ENCODE measurements at regions of chrX and their contacts with region 1.

Region 1: DNA sequence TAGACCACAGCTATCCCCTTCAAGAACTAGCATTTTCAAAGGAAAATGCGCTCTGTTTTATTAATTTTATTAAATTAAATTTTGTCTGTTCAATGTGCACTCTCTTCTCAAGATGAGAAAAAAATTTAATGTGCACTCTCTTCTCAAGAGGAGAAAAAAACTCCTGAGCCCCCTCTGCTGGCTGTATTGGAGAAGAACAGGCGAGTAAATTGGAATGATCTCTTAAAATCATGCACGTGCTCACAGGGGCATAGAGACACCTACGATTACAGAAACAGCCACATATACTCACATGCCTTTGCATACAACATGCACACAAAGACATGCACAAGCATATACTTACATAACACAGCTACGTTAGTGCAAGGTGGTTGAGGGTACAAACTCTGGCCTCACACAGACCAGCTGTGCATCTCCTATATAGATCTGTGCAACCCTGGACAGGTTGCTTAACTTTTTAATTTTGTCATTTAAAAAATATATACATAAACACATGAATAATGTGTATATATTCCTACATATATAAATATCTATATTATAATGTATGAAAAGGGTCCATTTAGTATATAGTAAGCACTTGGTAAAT is 176.2 kb upstream of the CXorf66 start:
- DNase-seq: peak in 1 of 2 experiments; percentile 55
- H3K4me3 ChIP-seq: no peak overlapping the region
- H3K27ac ChIP-seq: no peak overlapping the region
- H3K4me1 ChIP-seq: no peaks in the 10 kb centered on the region
- H3K27me3 ChIP-seq: no peaks in the 10 kb centered on the region
- CTCF ChIP-seq: peak in 2 of 3 experiments; percentile 46 to 48; a peak in 2 of 4 replicates
- EP300 ChIP-seq: no peak
- POLR2A ChIP-seq: no peak
- RAD21 ChIP-seq: peak; percentile 57 to 65

Region 2: DNA sequence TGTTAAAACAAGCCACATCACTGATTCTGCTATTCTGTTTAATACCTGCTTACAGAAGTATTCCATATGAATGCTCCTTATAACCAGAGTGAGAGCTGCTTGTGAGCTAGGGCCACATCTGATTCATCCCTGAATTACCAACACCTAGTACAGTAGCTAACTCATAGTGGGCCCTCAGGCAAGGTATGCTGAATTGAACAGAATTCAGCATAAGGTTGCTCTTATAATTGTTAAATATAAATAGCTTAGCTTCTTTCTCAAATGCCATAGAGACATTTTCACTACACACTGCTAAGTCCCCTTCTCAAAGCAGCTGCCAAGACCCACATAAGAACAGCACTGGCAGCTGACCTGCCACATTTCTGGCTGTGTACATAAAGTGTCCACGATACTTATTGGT is 406.5 kb before region 1 on chrX:
- CTCF ChIA-PET with region 1: no interaction called
- POLR2A ChIA-PET with region 1: no interaction called
- DNase-seq: no peak
- H3K4me3 ChIP-seq: no peak overlapping the region
- H3K27ac ChIP-seq: no peak overlapping the region
- H3K4me1 ChIP-seq: no peaks in the 10 kb centered on the region
- H3K27me3 ChIP-seq: no peaks in the 10 kb centered on the region
- CTCF ChIP-seq: no peak
- EP300 ChIP-seq: no peak
- POLR2A ChIP-seq: no peak
- RAD21 ChIP-seq: no peak

Region 3: DNA sequence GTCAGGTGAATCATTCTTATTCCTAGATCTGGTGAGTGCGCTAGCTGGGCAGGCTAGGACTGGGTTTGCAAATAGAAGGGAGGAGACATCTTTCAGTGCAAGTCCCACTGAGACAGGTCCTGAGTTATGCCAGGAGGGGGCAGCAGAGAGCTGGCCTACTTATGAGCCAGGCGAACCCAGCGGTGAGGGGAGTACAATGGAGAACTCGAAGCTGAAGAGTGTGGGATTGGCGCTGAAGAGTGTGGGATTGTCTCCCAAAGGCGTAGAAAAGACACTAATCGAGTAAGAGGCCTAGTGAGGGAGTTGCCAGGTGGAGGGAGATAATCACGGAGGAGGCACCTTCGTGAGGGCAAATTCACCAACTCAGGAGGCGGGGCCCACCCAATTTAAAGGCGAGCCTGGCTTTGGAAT is 84.5 kb before region 1 on chrX:
- CTCF ChIA-PET with region 1: interaction called, 15 read pairs
- POLR2A ChIA-PET with region 1: no interaction called
- DNase-seq: peak; percentile 63 to 83
- H3K4me3 ChIP-seq: no peak overlapping the region
- H3K27ac ChIP-seq: no peak overlapping the region
- H3K4me1 ChIP-seq: peaks cover 0 to 3% (median 0%) of the 10 kb centered on the region in 4 experiments; a peak in 2 of 7 replicates
- H3K27me3 ChIP-seq: no peaks in the 10 kb centered on the region
- CTCF ChIP-seq: peak; percentile 75 to 82 (median 79)
- EP300 ChIP-seq: no peak
- POLR2A ChIP-seq: no peak
- RAD21 ChIP-seq: peak; percentile 87 to 88

Region 4: DNA sequence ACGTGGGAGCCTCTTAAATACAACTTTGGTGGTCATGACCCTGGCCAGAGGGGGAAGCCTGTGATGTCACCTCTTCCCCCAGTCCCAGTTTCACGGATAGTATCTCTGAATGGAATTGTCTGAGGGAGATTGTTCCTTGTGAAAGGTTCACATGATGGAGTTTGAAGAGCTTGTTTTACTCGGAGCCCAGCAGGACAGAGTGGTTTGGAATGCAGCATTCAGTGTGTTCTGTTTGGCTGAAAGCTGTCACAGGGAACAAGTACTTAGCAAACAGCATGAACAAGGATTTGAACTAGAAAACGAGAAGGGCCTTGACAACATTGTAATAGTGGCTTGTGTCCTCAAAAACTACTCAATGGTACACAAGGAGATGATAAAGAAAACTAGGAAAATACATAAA is 42.3 kb before region 1 on chrX:
- CTCF ChIA-PET with region 1: interaction called, 13 read pairs
- POLR2A ChIA-PET with region 1: no interaction called
- DNase-seq: no peak
- H3K4me3 ChIP-seq: no peak overlapping the region
- H3K27ac ChIP-seq: no peak overlapping the region
- H3K4me1 ChIP-seq: peaks cover 3 to 7% (median 4%) of the 10 kb centered on the region in 4 experiments; a peak in 2 of 7 replicates
- H3K27me3 ChIP-seq: no peaks in the 10 kb centered on the region
- CTCF ChIP-seq: no peak
- EP300 ChIP-seq: no peak
- POLR2A ChIP-seq: no peak
- RAD21 ChIP-seq: no peak